PC-9 (cell line): ENCODE measurements at regions of chr7 and their contacts with region 1.

Region 1: GRCh38 chr7:43700059-43700501 is 29.2 kb downstream of the COA1 start:
- DNase-seq: peak in 1 of 2 experiments; percentile 68
- H3K4me3 ChIP-seq: no peak overlapping the region
- H3K27ac ChIP-seq: no peak overlapping the region
- H3K4me1 ChIP-seq: peaks cover 5% of the 10 kb centered on the region
- H3K27me3 ChIP-seq: no peaks in the 10 kb centered on the region
- CTCF ChIP-seq: peak; percentile 93

Region 2: DNA sequence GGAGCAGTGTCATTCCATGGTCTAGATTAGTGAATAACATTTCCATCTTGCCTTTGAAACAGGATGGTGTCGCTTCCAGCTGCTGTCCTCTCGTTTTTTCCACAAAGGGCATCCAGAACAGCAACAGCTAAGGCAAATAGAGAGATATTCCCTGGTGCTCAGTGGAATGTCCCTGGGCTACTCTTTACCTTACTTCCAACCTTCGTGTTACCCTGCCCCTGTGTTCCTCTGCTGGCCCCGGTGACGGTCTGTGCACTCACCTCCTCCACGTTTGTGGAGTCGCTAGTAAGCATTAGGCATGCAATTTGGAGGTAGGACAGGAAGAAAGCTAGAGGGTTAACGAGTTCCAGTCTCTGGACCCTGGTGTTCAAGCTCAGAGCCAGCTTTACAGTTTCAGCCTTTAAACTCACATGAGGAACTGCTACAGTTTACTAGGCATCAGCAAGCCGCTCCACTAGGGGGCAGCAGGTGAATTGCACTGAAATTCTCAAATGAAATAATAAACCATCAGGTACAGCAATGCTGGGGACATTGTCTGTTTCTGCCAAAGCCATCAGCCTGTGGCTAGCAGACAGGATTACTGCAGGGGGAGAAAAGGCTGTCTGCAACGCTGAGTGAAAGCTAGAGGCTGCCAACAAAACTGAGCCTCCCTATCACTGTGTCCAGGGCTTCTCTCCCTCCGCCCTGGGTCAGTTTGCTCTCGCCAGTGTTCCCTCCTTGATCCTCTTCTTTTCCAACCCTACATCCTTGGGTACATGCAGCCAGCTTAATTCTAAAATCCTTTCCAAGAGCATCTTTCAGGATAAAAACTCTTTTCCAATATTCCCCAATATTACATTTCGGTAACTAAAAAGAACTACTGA is 758.9 kb before region 1 on chr7:
- CTCF ChIA-PET with region 1: no interaction called
- POLR2A ChIA-PET with region 1: no interaction called
- intact Hi-C with region 1: loop called (anchors 5 kb)
- DNase-seq: peak; percentile 58 to 69
- H3K4me3 ChIP-seq: no peak overlapping the region
- H3K27ac ChIP-seq: no peak overlapping the region
- H3K4me1 ChIP-seq: no peaks in the 10 kb centered on the region
- H3K27me3 ChIP-seq: no peaks in the 10 kb centered on the region
- CTCF ChIP-seq: peak; percentile 98

Region 3: DNA sequence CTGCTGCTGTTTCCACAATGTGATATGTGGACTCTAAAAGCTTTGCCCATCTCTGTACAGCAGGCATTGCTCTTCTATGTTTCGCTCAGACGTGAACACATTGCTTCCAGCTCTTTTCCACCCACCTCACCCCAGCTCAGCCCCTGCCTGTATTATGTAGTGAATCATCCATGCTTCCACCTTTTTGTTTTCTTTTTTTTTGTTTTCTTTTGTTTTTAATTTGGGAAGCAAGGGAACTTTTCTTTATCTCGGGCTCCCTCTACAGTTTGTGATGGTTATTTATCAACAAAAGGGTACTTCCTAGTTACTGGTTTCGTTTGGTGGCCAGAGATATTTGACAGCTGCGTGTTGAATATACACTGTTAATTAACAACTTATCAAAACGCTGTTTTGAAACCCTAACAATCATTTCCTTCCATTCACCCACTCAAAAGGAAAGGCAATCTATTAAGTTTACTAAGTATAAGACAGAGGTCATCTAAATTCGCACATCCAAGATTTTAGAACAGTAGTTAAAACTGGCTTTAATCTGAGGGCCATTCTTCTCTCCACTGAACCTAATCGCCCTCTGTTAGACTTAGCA is 245.1 kb before region 1 on chr7:
- CTCF ChIA-PET with region 1: interaction called, 5 read pairs
- POLR2A ChIA-PET with region 1: no interaction called
- intact Hi-C with region 1: loop called (anchors 1 kb)
- DNase-seq: peak in 1 of 2 experiments; percentile 48
- H3K4me3 ChIP-seq: no peak overlapping the region; the same call in 1 of the 2 replicates
- H3K27ac ChIP-seq: no peak overlapping the region
- H3K4me1 ChIP-seq: no peaks in the 10 kb centered on the region
- H3K27me3 ChIP-seq: peaks cover 49% of the 10 kb centered on the region
- CTCF ChIP-seq: peak; percentile 83

Region 4: GRCh38 chr7:43501870-43502269 is 198.2 kb before region 1 on chr7:
- CTCF ChIA-PET with region 1: interaction called, 10 read pairs
- POLR2A ChIA-PET with region 1: no interaction called
- intact Hi-C with region 1: no loop called
- DNase-seq: no peak
- H3K4me3 ChIP-seq: no peak overlapping the region
- H3K27ac ChIP-seq: no peak overlapping the region
- H3K4me1 ChIP-seq: no peaks in the 10 kb centered on the region
- H3K27me3 ChIP-seq: peaks cover 90% of the 10 kb centered on the region
- CTCF ChIP-seq: no peak

Region 5: GRCh38 chr7:43647673-43648472 is 52.2 kb before region 1 on chr7:
- CTCF ChIA-PET with region 1: interaction called, 9 read pairs
- POLR2A ChIA-PET with region 1: no interaction called
- intact Hi-C with region 1: loop called (anchors 5 kb)
- DNase-seq: peak; percentile 82 to 100
- H3K4me3 ChIP-seq: peak overlapping the region; percentile 28; the same call in 1 of the 2 replicates
- H3K27ac ChIP-seq: peak overlapping the region; percentile 98
- H3K4me1 ChIP-seq: peaks cover 73% of the 10 kb centered on the region
- H3K27me3 ChIP-seq: no peaks in the 10 kb centered on the region
- CTCF ChIP-seq: no peak

Region 6: GRCh38 chr7:43931346-43931745 is 231.3 kb after region 1 on chr7:
- CTCF ChIA-PET with region 1: no interaction called
- POLR2A ChIA-PET with region 1: interaction called, 22 read pairs
- intact Hi-C with region 1: no loop called
- DNase-seq: peak in 1 of 2 experiments; percentile 25
- H3K4me3 ChIP-seq: no peak overlapping the region
- H3K27ac ChIP-seq: no peak overlapping the region
- H3K4me1 ChIP-seq: 0 out of 2 replicates have a peak, but pooled peaks cover 10% of the 10 kb centered on the region
- H3K27me3 ChIP-seq: no peaks in the 10 kb centered on the region
- CTCF ChIP-seq: no peak